Colonic mucosa (tissue), 4 donors: ENCODE measurements at regions of chr3 and their contacts with region 1.

Region 1: GRCh38 chr3:14203521-14204079 is 25.0 kb downstream of the LSM3 start:
- DNase-seq: peak; percentile 72
- H3K4me3 ChIP-seq: no peak overlapping the region
- H3K27ac ChIP-seq: no peak overlapping the region
- H3K4me1 ChIP-seq: no peaks in the 10 kb centered on the region
- H3K27me3 ChIP-seq: no peaks in the 10 kb centered on the region
- CTCF ChIP-seq: peak; percentile 67

Region 2: DNA sequence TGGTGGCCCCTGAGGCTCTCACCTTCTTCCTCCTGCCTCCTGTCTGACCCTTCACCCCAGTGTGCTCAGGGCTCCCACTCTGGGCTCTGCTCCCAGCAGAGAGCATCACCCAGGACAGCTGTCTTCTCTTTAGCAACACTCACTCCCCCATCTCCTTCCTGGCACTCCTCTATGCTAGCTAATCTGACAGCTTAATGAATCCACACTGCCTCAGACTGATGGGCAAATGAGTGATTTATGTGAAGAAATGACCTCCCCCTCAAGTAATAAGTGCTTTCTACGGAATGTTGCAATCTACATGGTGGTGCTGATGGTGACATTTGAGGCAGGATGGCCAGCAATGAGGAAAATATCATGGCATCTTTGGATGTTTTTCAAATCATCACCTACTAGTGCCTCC is 58.6 kb after region 1 on chr3:
- intact Hi-C with region 1: loop called (anchors 2 kb)
- DNase-seq: no peak
- H3K4me3 ChIP-seq: no peak overlapping the region
- H3K27ac ChIP-seq: no peak overlapping the region
- H3K4me1 ChIP-seq: no peaks in the 10 kb centered on the region
- H3K27me3 ChIP-seq: no peaks in the 10 kb centered on the region
- CTCF ChIP-seq: no peak

Region 3: DNA sequence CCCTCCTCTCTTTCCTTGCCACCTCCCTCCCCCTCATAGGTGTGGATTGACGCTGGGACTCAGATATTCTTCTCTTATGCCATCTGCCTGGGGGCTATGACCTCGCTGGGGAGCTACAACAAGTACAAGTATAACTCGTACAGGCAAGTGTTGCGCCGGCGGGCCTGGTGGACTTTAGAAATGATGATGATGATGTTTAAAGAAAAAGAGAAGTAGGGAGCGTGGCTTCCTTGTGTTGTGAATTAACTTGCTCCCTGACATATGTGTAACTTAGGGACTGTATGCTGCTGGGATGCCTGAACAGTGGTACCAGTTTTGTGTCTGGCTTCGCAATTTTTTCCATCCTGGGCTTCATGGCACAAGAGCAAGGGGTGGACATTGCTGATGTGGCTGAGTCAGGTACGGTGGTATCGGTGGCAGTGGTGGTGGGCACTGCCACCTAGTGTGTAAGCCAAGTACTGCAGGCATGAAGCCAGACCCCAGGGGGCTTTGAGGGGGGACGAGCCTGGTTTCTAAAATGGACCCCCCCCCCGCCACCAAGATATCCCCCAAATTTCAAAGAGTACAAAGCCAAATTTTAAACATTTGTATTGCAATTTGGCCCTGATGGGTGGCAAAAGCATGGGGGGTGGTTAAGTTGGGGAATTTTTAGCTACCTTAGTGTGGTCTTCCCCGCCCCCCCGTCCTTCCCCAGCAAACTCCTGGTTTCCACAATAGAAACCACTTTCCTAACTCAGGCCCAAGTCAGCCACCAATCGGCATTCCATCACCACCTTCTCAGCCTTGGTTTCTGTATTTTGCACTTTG is 264.4 kb after region 1 on chr3:
- intact Hi-C with region 1: loop called (anchors 2 kb)
- DNase-seq: peak; percentile 47
- H3K4me3 ChIP-seq: no peak overlapping the region
- H3K27ac ChIP-seq: no peak overlapping the region
- H3K4me1 ChIP-seq: no peaks in the 10 kb centered on the region
- H3K27me3 ChIP-seq: no peaks in the 10 kb centered on the region
- CTCF ChIP-seq: peak; percentile 90

Region 4: DNA sequence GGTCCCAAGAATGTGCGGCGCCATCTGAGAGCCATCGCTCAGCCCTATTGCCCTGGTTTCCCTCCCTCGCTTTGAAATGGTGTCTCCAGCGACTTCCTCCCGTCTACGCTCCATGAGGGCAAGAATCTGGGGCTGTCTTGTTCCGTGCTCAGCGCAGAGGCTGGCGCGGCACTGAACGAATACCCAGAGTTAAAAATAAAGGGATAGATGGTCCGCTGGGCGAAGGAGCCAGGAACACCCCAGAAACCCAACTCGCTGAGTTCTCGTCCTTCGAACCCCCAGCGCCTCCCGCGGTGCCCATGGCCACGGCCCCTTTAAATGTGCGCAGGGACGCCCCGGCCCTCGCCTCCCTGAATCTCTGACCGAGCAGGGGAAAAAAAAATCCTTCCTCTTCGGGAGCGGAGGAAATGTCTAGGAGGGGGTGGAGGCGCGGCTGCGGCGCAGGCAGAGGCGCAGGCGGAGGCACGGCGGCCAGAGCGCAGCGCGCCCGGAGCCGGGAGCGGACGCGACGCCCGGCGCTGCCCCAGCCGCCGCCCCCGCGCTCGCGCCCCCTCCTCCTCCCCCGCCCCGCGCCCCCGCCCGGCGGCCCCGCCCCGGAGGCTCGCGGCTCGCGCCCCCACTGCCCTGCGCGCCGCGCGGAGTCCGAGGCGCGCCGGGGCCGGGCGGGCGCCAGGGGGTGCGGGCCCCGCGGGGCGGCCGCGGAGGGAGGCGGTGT is 606.6 kb after region 1 on chr3:
- intact Hi-C with region 1: no loop called
- DNase-seq: no peak
- H3K4me3 ChIP-seq: peak overlapping the region; percentile 32
- H3K27ac ChIP-seq: peak overlapping the region; percentile 57
- H3K4me1 ChIP-seq: no peaks in the 10 kb centered on the region
- H3K27me3 ChIP-seq: peaks cover 13% of the 10 kb centered on the region
- CTCF ChIP-seq: no peak

Region 5: DNA sequence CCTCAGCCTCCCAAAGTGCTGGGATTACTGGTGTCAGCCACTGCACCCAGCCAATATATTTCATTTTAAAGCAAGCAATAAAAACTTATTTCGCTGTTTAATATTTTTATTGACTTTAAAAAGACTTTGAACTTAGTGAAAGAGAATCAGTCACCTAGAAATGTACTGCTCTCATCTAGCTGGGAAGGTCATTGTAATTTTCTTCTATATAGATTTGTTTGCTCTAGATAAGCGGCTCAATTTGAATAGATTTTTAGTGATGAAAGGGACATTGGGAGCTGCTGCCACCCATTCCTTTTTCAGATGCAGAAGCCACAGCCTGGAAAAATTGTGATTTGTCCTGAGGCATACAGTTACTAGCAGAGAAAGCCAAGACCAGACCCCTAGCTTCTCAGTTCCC is 1042.6 kb after region 1 on chr3:
- intact Hi-C with region 1: no loop called
- DNase-seq: no peak
- H3K4me3 ChIP-seq: no peak overlapping the region
- H3K27ac ChIP-seq: no peak overlapping the region
- H3K4me1 ChIP-seq: no peaks in the 10 kb centered on the region
- H3K27me3 ChIP-seq: no peaks in the 10 kb centered on the region
- CTCF ChIP-seq: no peak